ENCODE measurements at regions of chr3 and their contacts with region 1.

Region 1: GRCh38 chr3:166263455-166263854 is 426.2 kb upstream of the BCHE start:
- DNase-seq: no peak
- H3K4me3 ChIP-seq: no peak overlapping the region
- H3K27ac ChIP-seq: no peak overlapping the region
- H3K4me1 ChIP-seq: no peaks in the 10 kb centered on the region
- H3K27me3 ChIP-seq: no peaks in the 10 kb centered on the region
- CTCF ChIP-seq: no peak

Region 2: DNA sequence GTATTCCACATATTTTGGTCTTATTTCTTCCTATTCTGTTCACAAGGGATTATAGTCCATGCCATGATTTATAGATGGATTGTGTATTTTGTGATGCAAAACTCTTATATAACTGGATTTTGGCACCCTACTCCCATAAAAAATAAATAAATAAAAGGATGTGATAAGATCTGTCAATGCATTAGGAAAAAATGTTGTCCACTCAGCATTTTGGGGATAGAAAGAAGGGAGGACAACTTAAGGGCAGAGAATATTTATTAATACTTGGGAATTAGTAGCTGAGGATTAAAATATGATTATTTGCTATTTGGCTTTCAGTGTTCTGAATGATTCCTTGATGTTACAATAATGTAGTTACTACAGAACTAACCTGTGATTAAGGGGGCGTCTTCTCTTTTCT is 434.0 kb after region 1 on chr3:
- CTCF ChIA-PET with region 1: no interaction called
- POLR2A ChIA-PET with region 1: interaction called, 12 read pairs
- intact Hi-C with region 1: no loop called
- DNase-seq: no peak
- H3K4me3 ChIP-seq: no peak overlapping the region
- H3K27ac ChIP-seq: no peak overlapping the region
- H3K4me1 ChIP-seq: no peaks in the 10 kb centered on the region
- H3K27me3 ChIP-seq: no peaks in the 10 kb centered on the region
- CTCF ChIP-seq: no peak